IMR-90 (cell line): ENCODE measurements at regions of chr12 and their contacts with region 1.

Region 1: DNA sequence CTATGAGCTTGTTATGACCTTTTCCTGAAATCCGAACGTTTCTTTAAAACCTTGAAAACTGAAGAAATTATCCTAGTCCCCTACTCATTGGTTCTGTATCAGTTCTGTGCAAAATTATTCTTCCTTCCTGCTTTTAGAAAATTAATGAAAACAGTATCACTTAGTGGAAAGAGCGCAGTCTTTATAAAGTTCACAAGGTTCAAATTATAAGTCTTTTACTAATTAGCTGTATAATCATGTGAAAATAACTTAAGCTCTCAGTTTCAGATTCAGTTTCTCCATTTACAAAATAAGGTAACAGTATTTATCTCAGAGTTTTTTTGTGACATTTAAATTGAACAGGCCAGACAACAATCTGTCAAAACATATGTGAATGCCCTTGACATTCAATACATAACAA is 306.1 kb downstream of the ADAMTS20 start:
- DNase-seq: no peak
- ATAC-seq: no peak
- H3K4me3 ChIP-seq: no peak overlapping the region
- H3K27ac ChIP-seq: no peak overlapping the region
- H3K4me1 ChIP-seq: no peaks in the 10 kb centered on the region
- H3K27me3 ChIP-seq: no peaks in the 10 kb centered on the region
- CTCF ChIP-seq: no peak
- POLR2A ChIP-seq: no peak
- RAD21 ChIP-seq: no peak

Region 2: DNA sequence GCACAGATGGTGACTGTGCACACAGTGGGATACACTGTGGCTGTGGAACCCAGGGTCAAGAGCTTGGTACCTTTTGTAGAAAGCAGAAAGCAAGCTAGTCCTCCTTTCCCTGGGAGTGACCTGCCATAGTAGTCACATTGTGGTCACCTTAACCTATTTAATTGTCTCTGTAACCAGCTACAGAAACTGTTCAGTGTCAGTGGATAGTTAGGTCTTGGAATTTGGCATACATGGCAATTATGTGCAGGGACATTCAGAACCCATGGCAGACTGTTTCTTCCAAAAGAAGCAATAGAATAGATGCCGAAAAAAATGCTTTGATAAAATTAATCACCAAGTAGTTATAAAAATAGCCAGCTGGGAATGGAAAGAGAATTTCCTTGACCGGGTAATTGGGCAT is 889.6 kb before region 1 on chr12:
- CTCF ChIA-PET with region 1: no interaction called
- POLR2A ChIA-PET with region 1: no interaction called
- dilution Hi-C with region 1: no loop called
- in situ Hi-C with region 1: no loop called
- intact Hi-C with region 1: no loop called
- DNase-seq: no peak
- ATAC-seq: no peak
- H3K4me3 ChIP-seq: no peak overlapping the region
- H3K27ac ChIP-seq: no peak overlapping the region
- H3K4me1 ChIP-seq: peaks cover 2% of the 10 kb centered on the region; the same call in 1 of the 2 replicates
- H3K27me3 ChIP-seq: no peaks in the 10 kb centered on the region
- CTCF ChIP-seq: no peak
- POLR2A ChIP-seq: no peak
- RAD21 ChIP-seq: no peak

Region 3: GRCh38 chr12:42887657-42888056 is 358.3 kb before region 1 on chr12:
- CTCF ChIA-PET with region 1: no interaction called
- POLR2A ChIA-PET with region 1: no interaction called
- dilution Hi-C with region 1: no loop called
- in situ Hi-C with region 1: no loop called
- intact Hi-C with region 1: no loop called
- DNase-seq: peak; percentile 38
- ATAC-seq: 0 out of 2 replicates have a peak, but pooled peaks have one; percentile 46
- H3K4me3 ChIP-seq: no peak overlapping the region
- H3K27ac ChIP-seq: no peak overlapping the region
- H3K4me1 ChIP-seq: peaks cover 2% of the 10 kb centered on the region; the same call in 1 of the 2 replicates
- H3K27me3 ChIP-seq: no peaks in the 10 kb centered on the region
- CTCF ChIP-seq: no peak
- POLR2A ChIP-seq: no peak
- RAD21 ChIP-seq: no peak

Region 4: GRCh38 chr12:42969357-42969756 is 276.6 kb before region 1 on chr12:
- CTCF ChIA-PET with region 1: no interaction called
- POLR2A ChIA-PET with region 1: interaction called, 12 read pairs
- dilution Hi-C with region 1: no loop called
- in situ Hi-C with region 1: no loop called
- intact Hi-C with region 1: no loop called
- DNase-seq: no peak
- ATAC-seq: no peak
- H3K4me3 ChIP-seq: no peak overlapping the region
- H3K27ac ChIP-seq: no peak overlapping the region
- H3K4me1 ChIP-seq: no peaks in the 10 kb centered on the region
- H3K27me3 ChIP-seq: no peaks in the 10 kb centered on the region
- CTCF ChIP-seq: no peak
- POLR2A ChIP-seq: no peak
- RAD21 ChIP-seq: no peak

Region 5: GRCh38 chr12:42985506-42985905 is 260.4 kb before region 1 on chr12:
- CTCF ChIA-PET with region 1: no interaction called
- POLR2A ChIA-PET with region 1: no interaction called
- dilution Hi-C with region 1: no loop called
- in situ Hi-C with region 1: no loop called
- intact Hi-C with region 1: no loop called
- DNase-seq: peak; percentile 58
- ATAC-seq: peak; percentile 37; the same call in 1 of the 2 replicates
- H3K4me3 ChIP-seq: no peak overlapping the region
- H3K27ac ChIP-seq: no peak overlapping the region
- H3K4me1 ChIP-seq: no peaks in the 10 kb centered on the region
- H3K27me3 ChIP-seq: peaks cover 2% of the 10 kb centered on the region; the same call in 1 of the 2 replicates
- CTCF ChIP-seq: no peak
- POLR2A ChIP-seq: no peak
- RAD21 ChIP-seq: no peak